ENCODE measurements at regions of chr9 and their contacts with region 1.

Region 1: GRCh38 chr9:32526041-32526706 is at the start of gene RIGI:
- DNase-seq: peak; percentile 56 to 93 (median 72)
- ATAC-seq: peak; percentile 82
- H3K4me3 ChIP-seq: peak within 1 kb of the TSS; percentile 91
- H3K4me3 Mint-ChIP-seq: peak within 1 kb of the TSS; percentile 96
- H3K27ac ChIP-seq: peak within 1 kb of the TSS; percentile 83 to 91
- H3K27ac Mint-ChIP-seq: peak within 1 kb of the TSS; percentile 93
- H3K4me1 ChIP-seq: peaks cover 20% of the 10 kb centered on the region
- H3K4me1 Mint-ChIP-seq: peaks cover 57% of the 10 kb centered on the region
- H3K27me3 ChIP-seq: no peaks in the 10 kb centered on the region
- H3K27me3 Mint-ChIP-seq: no peaks in the 10 kb centered on the region
- CTCF ChIP-seq: peak; percentile 72
- total RNA-seq, gene RIGI: 4.9 to 5.0 TPM

Region 2: DNA sequence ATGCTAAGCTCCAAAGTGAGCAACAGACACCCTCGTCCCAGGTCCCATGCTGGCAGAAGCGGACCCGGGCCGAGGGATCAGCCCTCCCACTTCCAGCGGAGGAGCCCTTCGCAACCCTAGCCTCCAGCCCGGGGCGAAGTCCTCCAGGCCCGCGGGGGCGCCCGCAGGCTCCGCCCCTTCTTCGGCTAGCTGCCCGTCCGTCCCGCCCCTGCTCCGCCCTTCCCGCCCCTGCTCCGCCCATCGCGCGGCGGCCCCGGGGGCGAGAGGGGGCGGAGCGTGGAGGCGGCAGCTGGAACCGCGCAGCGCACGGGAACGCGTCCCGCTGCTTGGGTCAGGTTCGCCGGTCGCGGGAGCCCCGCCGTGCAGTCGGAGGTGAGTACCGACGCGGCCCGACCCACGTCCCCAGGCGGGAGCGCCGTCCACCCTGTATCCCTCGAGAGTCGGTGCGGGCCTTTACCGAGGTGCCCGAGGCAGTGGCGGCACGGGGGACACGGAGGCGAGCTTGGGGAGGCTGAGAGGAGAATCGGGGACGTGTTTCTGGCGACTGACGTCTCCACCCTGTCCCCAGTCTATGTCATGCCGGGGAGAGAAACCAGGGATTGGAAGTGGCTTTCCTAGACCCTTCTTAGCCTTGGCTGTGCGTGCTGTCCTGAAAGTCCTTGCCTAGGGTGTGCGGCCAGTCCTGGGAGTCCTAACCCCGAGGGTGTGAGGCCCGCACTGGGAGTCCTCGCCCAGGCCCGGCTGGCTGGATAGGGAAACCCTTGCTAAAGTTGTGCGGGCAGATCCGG is 141.6 kb before region 1 on chr9 and contains the start of gene ACO1:
- CTCF ChIA-PET with region 1: interaction called, 32 read pairs
- POLR2A ChIA-PET with region 1: interaction called, 21 read pairs
- intact Hi-C with region 1: loop called (anchors 1 to 2 kb)
- DNase-seq: peak; percentile 73 to 94 (median 86)
- ATAC-seq: peak; percentile 96
- H3K4me3 ChIP-seq: peak within 1 kb of the TSS; percentile 93
- H3K4me3 Mint-ChIP-seq: peak within 1 kb of the TSS; percentile 91
- H3K27ac ChIP-seq: no peak within 1 kb of the TSS
- H3K27ac Mint-ChIP-seq: peak within 1 kb of the TSS; percentile 53
- H3K4me1 ChIP-seq: peaks cover 23% of the 10 kb centered on the region
- H3K4me1 Mint-ChIP-seq: peaks cover 23% of the 10 kb centered on the region
- H3K27me3 ChIP-seq: peaks cover 0 to 5% of the 10 kb centered on the region in 2 experiments
- H3K27me3 Mint-ChIP-seq: no peaks in the 10 kb centered on the region
- CTCF ChIP-seq: no peak
- total RNA-seq, gene ACO1: 3.1 TPM

Region 3: DNA sequence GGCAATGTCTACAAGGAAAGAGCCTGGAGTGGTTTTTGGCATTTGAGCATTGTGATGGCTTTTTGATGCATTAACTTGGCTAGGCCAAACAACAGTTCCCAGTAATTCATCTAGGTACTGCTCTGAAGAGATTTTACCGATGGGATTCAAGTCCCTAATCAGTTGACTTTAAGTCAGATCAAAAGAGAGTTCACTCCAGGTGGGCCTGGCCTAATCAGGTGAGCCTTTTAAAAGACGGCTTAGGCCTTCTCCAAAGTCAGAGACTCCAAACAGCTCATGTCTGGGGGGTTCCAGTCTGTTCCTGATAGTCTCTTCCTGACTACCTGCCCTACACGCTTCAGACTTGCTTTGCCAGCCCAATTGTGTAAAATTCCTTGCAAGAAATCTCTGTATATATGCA is 53.8 kb before region 1 on chr9:
- CTCF ChIA-PET with region 1: no interaction called
- POLR2A ChIA-PET with region 1: no interaction called
- intact Hi-C with region 1: loop called in 1 of 2 experiments (anchors 10 kb)
- DNase-seq: no peak
- ATAC-seq: no peak
- H3K4me3 ChIP-seq: no peak overlapping the region
- H3K4me3 Mint-ChIP-seq: no peak overlapping the region
- H3K27ac ChIP-seq: no peak overlapping the region
- H3K27ac Mint-ChIP-seq: no peak overlapping the region
- H3K4me1 ChIP-seq: no peaks in the 10 kb centered on the region
- H3K4me1 Mint-ChIP-seq: no peaks in the 10 kb centered on the region
- H3K27me3 ChIP-seq: no peaks in the 10 kb centered on the region
- H3K27me3 Mint-ChIP-seq: no peaks in the 10 kb centered on the region
- CTCF ChIP-seq: no peak

Region 4: GRCh38 chr9:32558408-32558934 is 32.3 kb after region 1 on chr9:
- CTCF ChIA-PET with region 1: interaction called, 35 read pairs
- POLR2A ChIA-PET with region 1: interaction called, 3 read pairs
- intact Hi-C with region 1: loop called in 1 of 2 experiments (anchors 5 kb)
- DNase-seq: no peak
- ATAC-seq: no peak
- H3K4me3 ChIP-seq: no peak overlapping the region
- H3K4me3 Mint-ChIP-seq: no peak overlapping the region
- H3K27ac ChIP-seq: no peak overlapping the region
- H3K27ac Mint-ChIP-seq: peak overlapping the region; percentile 45
- H3K4me1 ChIP-seq: no peaks in the 10 kb centered on the region
- H3K4me1 Mint-ChIP-seq: peaks cover 45% of the 10 kb centered on the region
- H3K27me3 ChIP-seq: no peaks in the 10 kb centered on the region
- H3K27me3 Mint-ChIP-seq: no peaks in the 10 kb centered on the region
- CTCF ChIP-seq: no peak

Region 5: DNA sequence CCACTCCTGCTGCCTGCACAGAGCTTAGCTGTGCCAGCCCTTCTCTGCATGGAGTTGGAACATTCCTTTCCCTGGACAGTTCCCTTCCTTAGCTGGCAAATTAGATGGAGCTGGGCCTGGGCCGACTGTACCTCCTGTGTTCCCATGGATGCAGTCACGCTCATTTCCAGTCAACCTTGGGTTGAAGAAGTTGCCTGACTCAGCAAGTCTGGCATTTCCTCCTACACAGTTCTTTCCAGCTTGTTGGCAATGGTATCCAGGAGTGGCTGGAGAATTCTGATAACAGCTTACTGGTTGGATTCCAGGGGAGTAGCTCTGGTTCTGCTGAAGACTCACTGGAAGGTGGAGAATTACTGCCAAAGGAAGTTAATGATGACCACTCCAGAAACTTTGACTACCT is 118.5 kb after region 1 on chr9:
- CTCF ChIA-PET with region 1: no interaction called
- POLR2A ChIA-PET with region 1: no interaction called
- intact Hi-C with region 1: no loop called
- DNase-seq: no peak
- ATAC-seq: no peak
- H3K4me3 ChIP-seq: no peak overlapping the region
- H3K4me3 Mint-ChIP-seq: no peak overlapping the region
- H3K27ac ChIP-seq: no peak overlapping the region
- H3K27ac Mint-ChIP-seq: no peak overlapping the region
- H3K4me1 ChIP-seq: no peaks in the 10 kb centered on the region
- H3K4me1 Mint-ChIP-seq: no peaks in the 10 kb centered on the region
- H3K27me3 ChIP-seq: peaks cover 0 to 3% of the 10 kb centered on the region in 2 experiments
- H3K27me3 Mint-ChIP-seq: peaks cover 43% of the 10 kb centered on the region
- CTCF ChIP-seq: no peak

Measured in CD4-positive, alpha-beta T cell (primary cell).